ENCODE measurements at regions of chr1 and their contacts with region 1.

Region 1: DNA sequence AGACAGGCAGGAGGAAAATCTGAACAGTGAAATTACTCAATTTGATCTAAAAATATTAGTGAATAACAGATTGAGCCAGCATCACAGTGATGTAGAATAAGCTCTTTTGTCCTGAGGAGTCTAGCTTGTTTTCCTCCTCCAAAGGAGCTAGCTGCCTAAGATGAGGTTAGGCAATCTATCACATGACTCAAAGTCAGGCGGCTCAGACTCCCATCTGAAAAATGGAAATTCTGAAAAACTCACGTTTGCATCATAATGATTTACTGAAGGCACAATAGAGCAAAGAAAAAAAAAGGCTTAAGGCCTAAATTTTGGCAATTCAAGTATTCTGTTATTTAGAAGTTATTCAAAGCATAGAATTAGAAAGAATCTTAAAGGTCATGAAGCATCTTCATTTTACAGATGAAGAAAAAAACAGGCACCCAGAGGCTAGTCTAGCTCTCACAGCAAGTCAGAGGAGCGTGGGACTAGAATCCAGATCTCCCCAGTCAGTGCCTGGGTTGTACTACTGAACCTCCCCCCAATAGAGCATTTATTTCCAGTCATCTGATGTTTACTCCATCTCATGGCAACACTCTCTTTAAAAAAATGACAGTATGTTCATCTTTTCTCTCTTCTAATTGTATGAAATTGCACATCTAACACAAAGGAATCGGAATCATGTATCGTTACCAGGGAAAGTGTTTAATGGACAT is 62.5 kb upstream of the ATF3 start:
- DNase-seq: no peak

Region 2: GRCh38 chr1:212488397-212489283 is 57.4 kb before region 1 on chr1:
- intact Hi-C with region 1: loop called (anchors 10 kb)
- DNase-seq: peak in 5 of 10 donors; percentile 39 to 83 (median 42)

Measured in posterior cingulate gyrus (tissue), 11 donors.